ENCODE measurements at regions of chr15 and their contacts with region 1.

Region 1: GRCh38 chr15:39782441-39783138 is at the start of gene FSIP1:
- DNase-seq: peak; percentile 91 to 98 (median 97)
- ATAC-seq: peak; percentile 100
- H3K4me3 ChIP-seq: peak within 1 kb of the TSS; percentile 98
- H3K4me3 Mint-ChIP-seq: peak within 1 kb of the TSS; percentile 74 to 97 (median 90)
- H3K27ac ChIP-seq: peak within 1 kb of the TSS; percentile 80
- H3K27ac Mint-ChIP-seq: peak within 1 kb of the TSS; percentile 70 to 93 (median 90)
- H3K4me1 ChIP-seq: peaks cover 14 to 19% of the 10 kb centered on the region in 2 donors
- H3K4me1 Mint-ChIP-seq: peaks cover 30 to 59% (median 46%) of the 10 kb centered on the region in 7 donors
- H3K27me3 ChIP-seq: no peaks in the 10 kb centered on the region
- H3K27me3 Mint-ChIP-seq: peaks cover 0 to 7% (median 0%) of the 10 kb centered on the region in 5 donors
- total RNA-seq, gene FSIP1: 0.14 to 0.51 (median 0.35) TPM in 4 of 5 experiments, not detected in the other

Region 2: DNA sequence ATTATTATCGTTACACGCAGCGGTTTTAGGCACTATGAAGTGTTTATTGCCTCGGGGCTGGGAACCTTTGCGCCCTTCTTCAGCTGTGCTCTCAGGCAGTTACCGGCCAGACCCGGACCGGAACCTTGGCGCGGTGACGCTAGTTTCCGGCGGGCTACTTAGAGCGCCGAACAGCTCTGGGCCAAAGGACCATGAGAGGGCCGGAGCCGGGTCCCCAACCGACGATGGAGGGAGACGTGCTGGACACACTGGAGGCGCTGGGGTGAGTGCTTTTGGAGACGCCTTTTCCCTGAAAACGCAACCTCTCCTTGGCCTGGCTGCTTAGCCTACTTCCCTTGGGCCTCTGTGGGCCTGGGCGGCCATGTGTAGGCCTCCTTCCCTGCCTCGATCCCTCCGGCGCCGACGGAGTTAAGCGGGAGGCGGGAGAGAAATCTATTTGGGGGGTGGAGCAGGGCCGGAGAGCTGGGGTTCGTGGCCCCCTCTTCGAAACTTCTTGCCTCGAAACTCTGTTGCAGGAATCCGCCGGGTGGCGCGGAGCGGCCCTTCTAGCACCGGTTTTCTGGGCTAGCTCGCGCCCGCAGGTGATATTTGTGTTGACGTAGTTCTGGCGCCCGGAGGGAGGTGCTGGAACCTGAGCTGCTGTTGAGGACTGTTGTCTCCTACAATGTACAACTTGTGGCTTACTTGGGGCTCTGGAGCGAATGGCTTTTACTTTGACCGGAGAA is 1328.5 kb before region 1 on chr15 and contains the start of gene FAM98B:
- CTCF ChIA-PET with region 1: no interaction called
- POLR2A ChIA-PET with region 1: interaction called, 5 read pairs
- intact Hi-C with region 1: loop called in 1 of 2 experiments (anchors 2 kb)
- DNase-seq: peak; percentile 73 to 94 (median 82)
- ATAC-seq: peak; percentile 92
- H3K4me3 ChIP-seq: peak within 1 kb of the TSS; percentile 98
- H3K4me3 Mint-ChIP-seq: peak within 1 kb of the TSS; percentile 86 to 99 (median 96)
- H3K27ac ChIP-seq: peak within 1 kb of the TSS; percentile 95
- H3K27ac Mint-ChIP-seq: peak within 1 kb of the TSS; percentile 92 to 99 (median 95)
- H3K4me1 ChIP-seq: peaks cover 13 to 22% of the 10 kb centered on the region in 2 donors
- H3K4me1 Mint-ChIP-seq: peaks cover 24 to 46% (median 36%) of the 10 kb centered on the region in 7 donors
- H3K27me3 ChIP-seq: no peaks in the 10 kb centered on the region
- H3K27me3 Mint-ChIP-seq: peaks cover 0 to 19% (median 0%) of the 10 kb centered on the region in 5 donors
- total RNA-seq, gene FAM98B: 16.2 to 39.5 (median 27.6) TPM

Region 3: DNA sequence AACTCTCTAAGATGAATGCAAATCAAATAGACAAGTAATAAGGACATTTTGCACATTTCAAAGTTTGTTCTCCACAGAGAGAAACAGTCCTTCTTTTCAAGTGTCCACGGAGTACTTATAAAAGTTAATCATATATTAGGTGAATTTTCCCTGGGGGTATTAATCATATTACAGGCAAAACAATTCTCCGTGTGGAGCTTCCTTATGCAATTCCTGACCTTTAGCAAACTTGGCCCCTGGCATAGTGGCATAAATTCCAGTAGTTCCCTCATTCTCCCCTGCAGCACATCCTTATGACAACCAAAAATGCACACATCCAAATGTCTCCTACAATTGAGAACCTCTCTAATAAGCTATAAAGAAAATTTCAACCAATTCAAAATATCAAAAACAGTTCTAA is 34.3 kb before region 1 on chr15:
- CTCF ChIA-PET with region 1: no interaction called
- POLR2A ChIA-PET with region 1: no interaction called
- intact Hi-C with region 1: no loop called
- DNase-seq: no peak
- ATAC-seq: no peak
- H3K4me3 ChIP-seq: no peak overlapping the region
- H3K4me3 Mint-ChIP-seq: no peak overlapping the region
- H3K27ac ChIP-seq: no peak overlapping the region
- H3K27ac Mint-ChIP-seq: no peak overlapping the region
- H3K4me1 ChIP-seq: no peaks in the 10 kb centered on the region
- H3K4me1 Mint-ChIP-seq: peaks cover 0 to 2% (median 0%) of the 10 kb centered on the region in 7 donors
- H3K27me3 ChIP-seq: no peaks in the 10 kb centered on the region
- H3K27me3 Mint-ChIP-seq: peaks cover 21 to 74% (median 47%) of the 10 kb centered on the region in 5 donors

Region 4: GRCh38 chr15:39934397-39935071 is 151.9 kb after region 1 on chr15:
- CTCF ChIA-PET with region 1: no interaction called
- POLR2A ChIA-PET with region 1: interaction called, 3 read pairs
- intact Hi-C with region 1: loop called (anchors 1 kb)
- DNase-seq: peak in 5 of 9 donors; percentile 5 to 14 (median 9)
- ATAC-seq: no peak
- H3K4me3 ChIP-seq: peak overlapping the region; percentile 76
- H3K4me3 Mint-ChIP-seq: peak overlapping the region; percentile 86 to 95 (median 89)
- H3K27ac ChIP-seq: peak overlapping the region; percentile 78
- H3K27ac Mint-ChIP-seq: peak overlapping the region; percentile 20 to 91 (median 64)
- H3K4me1 ChIP-seq: peaks cover 14 to 16% of the 10 kb centered on the region in 2 donors
- H3K4me1 Mint-ChIP-seq: peaks cover 28 to 50% (median 33%) of the 10 kb centered on the region in 7 donors
- H3K27me3 ChIP-seq: no peaks in the 10 kb centered on the region
- H3K27me3 Mint-ChIP-seq: peaks cover 0 to 6% (median 0%) of the 10 kb centered on the region in 5 donors

Region 5: GRCh38 chr15:40092256-40092978 is 309.8 kb after region 1 on chr15:
- CTCF ChIA-PET with region 1: no interaction called
- POLR2A ChIA-PET with region 1: no interaction called
- intact Hi-C with region 1: no loop called
- DNase-seq: no peak
- ATAC-seq: no peak
- H3K4me3 ChIP-seq: no peak overlapping the region
- H3K4me3 Mint-ChIP-seq: no peak overlapping the region
- H3K27ac ChIP-seq: no peak overlapping the region
- H3K27ac Mint-ChIP-seq: peak overlapping the region in 1 of 9 donors; percentile 1
- H3K4me1 ChIP-seq: peaks cover 0 to 8% of the 10 kb centered on the region in 2 donors
- H3K4me1 Mint-ChIP-seq: peaks cover 13 to 44% (median 19%) of the 10 kb centered on the region in 7 donors
- H3K27me3 ChIP-seq: no peaks in the 10 kb centered on the region
- H3K27me3 Mint-ChIP-seq: no peaks in the 10 kb centered on the region

Region 6: GRCh38 chr15:40160689-40161688 is 378.4 kb after region 1 on chr15 and contains the start of gene BUB1B:
- CTCF ChIA-PET with region 1: no interaction called
- POLR2A ChIA-PET with region 1: no interaction called
- intact Hi-C with region 1: loop called (anchors 1 kb)
- DNase-seq: peak; percentile 79 to 94 (median 92)
- ATAC-seq: peak; percentile 100
- H3K4me3 ChIP-seq: peak within 1 kb of the TSS; percentile 80
- H3K4me3 Mint-ChIP-seq: peak within 1 kb of the TSS in 2 of 10 donors; percentile 15 to 51
- H3K27ac ChIP-seq: peak within 1 kb of the TSS; percentile 29
- H3K27ac Mint-ChIP-seq: no peak within 1 kb of the TSS
- H3K4me1 ChIP-seq: peaks cover 0 to 7% of the 10 kb centered on the region in 2 donors
- H3K4me1 Mint-ChIP-seq: peaks cover 0 to 12% (median 0%) of the 10 kb centered on the region in 7 donors
- H3K27me3 ChIP-seq: no peaks in the 10 kb centered on the region
- H3K27me3 Mint-ChIP-seq: no peaks in the 10 kb centered on the region
- total RNA-seq, gene BUB1B: 0.41 to 55.7 (median 1.2) TPM

Region 7: DNA sequence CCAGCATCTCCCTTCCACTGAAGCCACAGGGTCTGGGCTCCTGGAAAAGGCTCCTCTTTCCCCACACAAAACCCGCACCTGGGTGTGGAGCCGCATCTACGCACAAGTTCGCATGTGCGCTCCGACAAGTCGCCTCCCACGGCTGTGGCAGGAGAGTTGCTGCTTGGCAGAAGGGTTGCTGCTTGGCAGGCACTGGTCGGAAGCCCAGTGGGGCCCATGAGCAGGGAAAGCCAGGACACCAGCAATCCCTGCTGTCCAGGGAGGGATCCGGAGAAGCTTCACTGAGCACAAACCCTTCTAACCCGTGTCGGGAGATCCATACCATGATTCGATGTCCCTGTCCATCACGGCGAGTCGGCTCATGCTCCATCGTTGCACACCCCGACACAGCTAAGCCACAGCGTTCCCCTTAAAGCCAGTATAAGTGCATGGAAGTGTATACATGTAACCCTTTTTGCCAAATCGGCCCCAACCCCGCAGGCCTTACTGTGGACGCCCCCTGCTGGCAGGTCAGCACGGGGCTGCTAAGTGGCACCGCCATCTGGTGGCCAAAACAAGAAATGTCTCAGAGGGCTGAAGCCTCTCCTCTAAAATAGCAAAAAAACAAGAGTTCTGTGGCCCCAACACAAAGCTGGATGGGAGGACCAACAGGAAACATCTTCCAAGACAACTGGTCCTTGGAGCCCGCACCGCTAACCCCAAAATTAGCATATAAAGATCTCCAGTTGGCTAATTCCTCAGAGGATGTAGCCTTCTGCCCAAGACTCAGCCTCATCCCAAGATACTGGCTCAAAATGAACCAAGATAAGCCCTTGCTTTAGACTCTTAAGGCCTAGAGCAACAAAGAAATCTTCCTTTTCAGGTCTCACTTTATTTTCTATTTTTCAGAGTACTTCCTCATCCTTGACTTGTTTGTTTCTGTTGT is 492.0 kb after region 1 on chr15:
- CTCF ChIA-PET with region 1: interaction called, 8 read pairs
- POLR2A ChIA-PET with region 1: no interaction called
- intact Hi-C with region 1: loop called (anchors 1 kb)
- DNase-seq: peak; percentile 71 to 95 (median 88)
- ATAC-seq: peak; percentile 94
- H3K4me3 ChIP-seq: no peak overlapping the region
- H3K4me3 Mint-ChIP-seq: peak overlapping the region in 1 of 10 donors; percentile 45
- H3K27ac ChIP-seq: no peak overlapping the region
- H3K27ac Mint-ChIP-seq: peak overlapping the region in 6 of 9 donors; percentile 17 to 70 (median 50)
- H3K4me1 ChIP-seq: peaks cover 0 to 3% of the 10 kb centered on the region in 2 donors
- H3K4me1 Mint-ChIP-seq: peaks cover 0 to 17% (median 5%) of the 10 kb centered on the region in 7 donors
- H3K27me3 ChIP-seq: no peaks in the 10 kb centered on the region
- H3K27me3 Mint-ChIP-seq: peaks cover 12 to 29% (median 16%) of the 10 kb centered on the region in 5 donors

Region 8: DNA sequence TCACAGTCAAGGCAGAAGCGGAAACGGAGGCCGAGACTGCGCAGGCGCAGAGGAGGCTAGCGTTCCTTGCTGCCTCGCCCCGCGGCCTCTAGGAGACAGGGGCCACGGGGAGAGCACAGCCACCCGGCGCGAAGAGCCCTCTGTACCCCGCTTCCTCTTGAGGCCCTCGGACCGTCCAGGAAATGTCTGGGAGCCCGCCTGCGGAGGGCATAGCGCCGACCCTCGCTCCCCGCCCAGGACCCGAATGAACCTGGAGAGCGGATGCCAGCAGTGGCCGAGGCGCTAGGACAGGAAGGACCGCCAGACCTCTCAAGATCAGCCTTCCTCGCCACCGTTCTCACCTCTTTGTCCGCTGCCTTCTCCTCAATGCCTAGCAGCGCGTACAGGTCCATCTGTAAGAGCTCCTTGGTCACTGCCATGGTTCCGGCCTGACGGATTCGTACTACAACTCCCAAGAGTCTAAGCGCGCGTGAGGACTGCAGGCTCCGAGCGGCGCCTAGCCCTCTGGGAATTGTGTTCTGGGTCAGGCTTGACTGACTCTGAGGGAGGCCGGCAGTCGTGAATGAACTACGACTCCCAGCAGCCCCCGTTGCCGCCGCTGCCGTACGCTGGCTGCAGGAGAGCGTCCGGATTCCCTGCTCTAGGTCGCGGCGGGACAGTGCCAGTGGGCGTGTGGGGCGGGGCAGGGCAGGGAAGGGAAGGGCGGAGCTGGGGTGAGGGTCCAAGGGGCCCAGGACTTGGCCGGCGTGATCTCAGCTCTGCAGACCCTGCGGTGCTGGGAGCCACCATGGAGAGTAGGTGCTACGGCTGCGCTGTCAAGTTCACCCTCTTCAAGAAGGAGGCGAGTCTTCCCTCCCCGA is 1024.7 kb after region 1 on chr15 and contains the starts of genes DNAJC17 and ZFYVE19:
- CTCF ChIA-PET with region 1: no interaction called
- POLR2A ChIA-PET with region 1: no interaction called
- intact Hi-C with region 1: loop called in 1 of 2 experiments (anchors 5 kb)
- DNase-seq: peak; percentile 86 to 96 (median 91)
- ATAC-seq: peak; percentile 99
- H3K4me3 ChIP-seq: peak within 1 kb of the TSS; percentile 99
- H3K4me3 Mint-ChIP-seq: peak within 1 kb of the TSS; percentile 92 to 98 (median 96)
- H3K27ac ChIP-seq: peak within 1 kb of the TSS; percentile 95
- H3K27ac Mint-ChIP-seq: peak within 1 kb of the TSS; percentile 84 to 98 (median 96)
- H3K4me1 ChIP-seq: peaks cover 14 to 16% of the 10 kb centered on the region in 2 donors
- H3K4me1 Mint-ChIP-seq: peaks cover 17 to 43% (median 25%) of the 10 kb centered on the region in 7 donors
- H3K27me3 ChIP-seq: no peaks in the 10 kb centered on the region
- H3K27me3 Mint-ChIP-seq: no peaks in the 10 kb centered on the region
- total RNA-seq, gene DNAJC17: 28.8 to 50.9 (median 36.7) TPM
- total RNA-seq, gene ZFYVE19: 17.9 to 31.9 (median 30.5) TPM

Region 9: GRCh38 chr15:41133454-41133853 is 1350.9 kb after region 1 on chr15:
- CTCF ChIA-PET with region 1: no interaction called
- POLR2A ChIA-PET with region 1: no interaction called
- intact Hi-C with region 1: no loop called
- DNase-seq: no peak
- ATAC-seq: no peak
- H3K4me3 ChIP-seq: no peak overlapping the region
- H3K4me3 Mint-ChIP-seq: no peak overlapping the region
- H3K27ac ChIP-seq: no peak overlapping the region
- H3K27ac Mint-ChIP-seq: no peak overlapping the region
- H3K4me1 ChIP-seq: no peaks in the 10 kb centered on the region
- H3K4me1 Mint-ChIP-seq: no peaks in the 10 kb centered on the region
- H3K27me3 ChIP-seq: no peaks in the 10 kb centered on the region
- H3K27me3 Mint-ChIP-seq: peaks cover 0 to 21% (median 5%) of the 10 kb centered on the region in 5 donors

Measured in naive thymus-derived CD4-positive, alpha-beta T cell (primary cell).